G401 (cell line): ENCODE measurements at regions of chr17 and their contacts with region 1.

Region 1: DNA sequence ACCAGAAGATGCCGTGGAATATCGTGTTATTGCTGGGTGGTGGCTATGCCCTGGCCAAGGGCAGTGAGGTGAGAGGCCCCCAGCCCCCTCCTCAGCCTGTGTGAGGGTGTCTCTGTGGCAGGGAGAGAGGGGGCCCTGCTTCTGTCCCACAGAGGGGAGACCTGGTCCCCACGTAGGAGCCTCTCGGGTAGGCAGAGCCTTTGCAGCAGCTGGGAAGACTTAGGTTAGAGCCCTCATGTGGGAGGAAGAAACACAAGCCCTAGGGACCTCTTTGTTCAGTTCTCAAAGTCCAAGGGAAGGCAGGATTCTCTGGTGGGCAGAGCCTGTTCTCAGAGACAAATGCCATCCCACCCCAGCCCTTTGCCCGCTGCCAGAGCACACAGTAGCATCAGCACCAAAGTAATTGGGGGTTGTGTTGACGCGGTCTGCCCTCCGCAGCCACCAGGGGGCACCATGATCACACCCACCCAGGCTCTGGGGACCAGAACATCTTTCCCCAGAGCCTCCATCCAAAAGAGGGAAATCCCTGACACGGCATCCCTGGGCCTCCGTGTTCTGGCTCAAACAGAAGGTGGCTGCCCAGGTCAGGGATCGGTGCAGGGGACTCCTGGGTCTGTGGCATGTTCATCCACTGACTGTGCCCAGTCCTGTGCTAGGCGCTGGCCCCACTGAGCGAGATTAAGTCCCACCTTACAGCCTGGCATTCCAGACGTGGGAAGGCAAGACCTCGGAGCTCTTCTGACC is 11.5 kb upstream of the FOXN1 start:
- DNase-seq: peak; percentile 65

Region 2: DNA sequence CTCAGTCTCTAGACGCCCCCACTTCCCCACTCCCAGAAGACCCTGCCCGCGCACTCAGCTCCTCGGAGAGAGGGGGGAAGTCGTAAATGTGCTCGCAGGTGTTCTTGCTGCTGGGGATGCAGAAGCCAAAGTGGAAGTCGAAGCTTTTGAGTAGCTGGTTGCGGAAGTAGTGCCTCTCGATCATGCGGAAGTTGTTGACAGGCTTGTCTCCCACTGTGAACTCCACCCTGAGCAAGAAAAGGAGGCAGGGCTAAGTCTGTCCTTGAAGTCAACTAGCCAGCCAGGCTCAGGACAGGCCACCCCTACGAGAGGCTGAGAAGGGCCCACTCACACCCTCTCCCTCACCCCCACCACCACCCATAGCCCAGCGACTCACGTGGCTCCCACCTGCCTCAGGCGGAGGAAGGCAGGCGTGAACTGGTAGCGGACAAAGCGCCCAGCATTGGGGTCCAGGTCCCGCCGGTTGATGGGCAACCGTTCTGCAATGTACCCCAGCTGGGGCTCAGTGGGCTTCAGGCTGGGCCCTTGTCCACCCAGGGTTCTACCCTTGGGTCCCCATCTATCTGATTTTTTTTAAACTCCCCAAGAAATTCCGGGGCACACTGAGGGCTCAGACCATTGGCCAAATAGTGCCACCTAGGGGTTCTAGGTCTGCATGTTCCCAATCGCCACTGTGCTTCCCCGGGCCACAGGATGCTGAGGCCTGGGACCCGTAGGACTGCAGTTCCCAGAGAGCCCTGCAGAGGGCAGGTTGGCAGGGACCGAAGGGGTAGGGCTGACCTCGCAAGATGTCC is 53.2 kb after region 1 on chr17:
- in situ Hi-C with region 1: loop called (anchors 5 kb)
- DNase-seq: peak; percentile 74

Region 3: GRCh38 chr17:28571255-28572122 is 76.9 kb after region 1 on chr17 and contains the start of gene PIGS:
- in situ Hi-C with region 1: no loop called
- DNase-seq: peak; percentile 96
- total RNA-seq, gene PIGS: 50.8 and 64.4 TPM in 2 replicates